ENCODE measurements at regions of chr10 and their contacts with region 1.

Region 1: GRCh38 chr10:95236068-95236903 is 42.2 kb downstream of the ACSM6 start:
- DNase-seq: no peak
- ATAC-seq: peak in 6 of 8 donors; percentile 9 to 66 (median 34)
- H3K4me3 ChIP-seq: no peak overlapping the region
- H3K27ac ChIP-seq: peak overlapping the region in 1 of 10 donors; percentile 44
- H3K4me1 ChIP-seq: peaks cover 0 to 16% (median 0%) of the 10 kb centered on the region in 9 donors
- H3K27me3 ChIP-seq: no peaks in the 10 kb centered on the region
- CTCF ChIP-seq: no peak

Region 2: DNA sequence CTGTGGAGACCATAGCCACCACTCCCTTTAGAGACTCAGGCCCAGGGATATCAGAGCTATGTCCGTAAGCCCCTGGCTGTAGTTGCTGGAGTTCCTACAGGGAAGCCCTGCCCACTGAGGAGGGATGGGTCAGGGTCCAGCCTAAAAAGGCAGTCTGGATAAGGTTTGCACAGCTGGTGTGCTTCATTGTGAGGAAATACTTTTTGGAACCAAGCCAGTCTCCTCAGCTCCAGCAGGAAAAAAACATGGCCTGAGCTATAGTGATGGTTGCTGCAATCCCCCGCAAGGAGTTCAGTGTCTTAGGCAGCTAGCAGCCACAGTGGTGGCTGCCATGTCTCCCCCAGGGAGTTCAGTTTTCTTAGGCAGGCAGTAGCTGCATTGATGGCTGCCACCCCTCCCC is 114.4 kb before region 1 on chr10:
- intact Hi-C with region 1: no loop called
- DNase-seq: no peak
- ATAC-seq: peak in 1 of 8 donors; percentile 31
- H3K4me3 ChIP-seq: no peak overlapping the region
- H3K27ac ChIP-seq: no peak overlapping the region
- H3K4me1 ChIP-seq: no peaks in the 10 kb centered on the region
- H3K27me3 ChIP-seq: peaks cover 0 to 11% (median 0%) of the 10 kb centered on the region in 7 donors
- CTCF ChIP-seq: no peak

Region 3: DNA sequence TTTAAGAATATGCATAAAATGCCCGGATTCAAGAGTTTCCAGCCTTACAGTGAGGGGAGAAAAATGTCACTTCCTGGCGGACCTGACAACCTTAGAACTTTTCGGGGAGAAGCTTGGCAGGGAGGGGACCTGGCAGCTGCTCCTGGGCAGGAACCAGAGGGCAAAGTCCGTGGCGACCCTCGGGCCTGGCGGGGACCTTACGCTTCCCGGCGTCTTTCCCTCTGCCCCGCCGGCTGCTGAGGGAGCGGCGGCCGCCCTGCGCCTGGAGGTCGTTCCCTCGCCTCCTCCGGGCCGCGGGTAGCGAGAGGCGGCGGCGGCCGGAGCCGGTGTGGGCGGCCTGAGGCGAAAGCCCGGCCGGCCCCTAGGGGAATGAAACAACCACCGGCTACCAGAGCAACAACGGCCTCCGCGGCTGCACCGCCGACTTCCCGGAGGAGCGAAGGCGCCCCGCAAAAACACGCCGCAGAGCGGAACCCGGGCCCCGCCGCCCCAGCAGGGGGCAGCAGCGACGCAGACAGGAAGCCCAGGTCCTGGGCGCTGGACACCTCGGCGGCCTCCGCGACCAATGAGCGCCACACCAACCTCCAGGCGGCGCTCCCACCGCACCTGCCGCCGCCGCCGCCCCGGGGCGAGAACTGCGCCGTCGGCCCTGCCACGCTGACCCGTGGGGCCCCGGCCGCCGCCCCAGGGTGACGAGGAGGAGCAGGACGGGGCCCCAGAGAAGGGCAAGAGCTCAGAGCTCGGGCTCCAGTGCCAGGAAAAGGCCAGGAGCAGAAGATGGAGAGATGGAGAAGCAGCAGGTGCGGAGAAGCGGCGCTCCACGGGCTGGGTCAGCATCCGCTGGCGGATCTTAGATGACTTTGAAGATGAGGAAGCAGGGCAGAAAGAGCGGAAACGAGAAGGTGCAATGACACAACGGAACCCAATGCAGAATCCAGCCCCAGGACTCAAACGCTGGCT is 52.7 kb before region 1 on chr10:
- intact Hi-C with region 1: loop called in 1 of 10 experiments (anchors 10 kb)
- DNase-seq: peak; percentile 85 to 92
- ATAC-seq: peak; percentile 97 to 99 (median 98)
- H3K4me3 ChIP-seq: peak overlapping the region; percentile 28 to 80 (median 72)
- H3K27ac ChIP-seq: peak overlapping the region; percentile 8 to 90 (median 82)
- H3K4me1 ChIP-seq: peaks cover 0 to 11% (median 6%) of the 10 kb centered on the region in 9 donors
- H3K27me3 ChIP-seq: no peaks in the 10 kb centered on the region
- CTCF ChIP-seq: peak; percentile 92 to 100 (median 97)

Region 4: DNA sequence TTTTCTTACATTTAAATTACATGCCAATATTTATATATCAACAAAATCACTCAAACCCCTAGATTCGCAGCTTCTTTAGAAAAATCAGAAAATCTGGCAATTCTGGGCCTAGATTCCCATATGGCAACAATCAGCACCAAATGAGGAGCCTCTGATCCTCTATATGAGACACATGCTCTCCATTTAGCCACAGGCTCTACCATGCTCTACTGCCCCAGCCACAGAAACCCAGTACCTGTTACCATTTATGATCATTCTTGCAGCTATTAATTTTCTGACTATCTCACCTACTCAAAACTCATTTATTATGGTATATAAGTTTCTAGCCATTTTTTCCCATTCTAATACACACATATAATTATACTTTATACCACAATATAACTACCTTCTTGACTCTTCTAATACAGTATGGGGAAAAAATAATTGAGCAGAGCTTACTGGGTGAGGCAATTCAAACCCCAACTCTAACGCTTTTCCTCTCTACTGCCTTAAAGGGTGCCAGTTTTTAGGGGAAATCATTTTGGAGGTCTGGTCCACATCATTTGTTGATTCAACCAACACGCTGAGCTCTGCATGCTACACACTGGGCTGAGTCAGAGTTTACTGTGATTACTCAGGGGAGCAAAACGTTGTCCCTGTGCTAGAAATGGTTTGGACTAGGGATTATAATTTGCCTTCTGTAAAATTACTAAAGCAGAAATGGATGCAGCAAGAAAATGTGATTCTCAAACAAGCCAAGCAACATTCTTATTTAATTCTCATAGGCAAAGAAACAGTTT is 42.9 kb after region 1 on chr10:
- intact Hi-C with region 1: no loop called
- DNase-seq: no peak
- ATAC-seq: peak in 1 of 8 donors; percentile 51
- H3K4me3 ChIP-seq: no peak overlapping the region
- H3K27ac ChIP-seq: peak overlapping the region in 7 of 10 donors; percentile 51 to 86 (median 82)
- H3K4me1 ChIP-seq: peaks cover 4 to 100% (median 83%) of the 10 kb centered on the region in 9 donors
- H3K27me3 ChIP-seq: no peaks in the 10 kb centered on the region
- CTCF ChIP-seq: no peak

Measured in heart right ventricle (tissue), 16 donors.